ENCODE measurements at regions of chr12 and their contacts with region 1.

Region 1: GRCh38 chr12:10235761-10236631 is 23.3 kb downstream of the GABARAPL1 start:
- DNase-seq: peak in 4 of 5 donors; percentile 30 to 43 (median 38)
- H3K4me3 ChIP-seq: no peak overlapping the region
- H3K4me3 Mint-ChIP-seq: no peak overlapping the region
- H3K27ac ChIP-seq: no peak overlapping the region
- H3K27ac Mint-ChIP-seq: no peak overlapping the region
- H3K4me1 ChIP-seq: no peaks in the 10 kb centered on the region
- H3K4me1 Mint-ChIP-seq: peaks cover 0 to 2% (median 0%) of the 10 kb centered on the region in 4 donors
- H3K27me3 ChIP-seq: no peaks in the 10 kb centered on the region
- H3K27me3 Mint-ChIP-seq: peaks cover 0 to 1% of the 10 kb centered on the region in 2 donors

Region 2: DNA sequence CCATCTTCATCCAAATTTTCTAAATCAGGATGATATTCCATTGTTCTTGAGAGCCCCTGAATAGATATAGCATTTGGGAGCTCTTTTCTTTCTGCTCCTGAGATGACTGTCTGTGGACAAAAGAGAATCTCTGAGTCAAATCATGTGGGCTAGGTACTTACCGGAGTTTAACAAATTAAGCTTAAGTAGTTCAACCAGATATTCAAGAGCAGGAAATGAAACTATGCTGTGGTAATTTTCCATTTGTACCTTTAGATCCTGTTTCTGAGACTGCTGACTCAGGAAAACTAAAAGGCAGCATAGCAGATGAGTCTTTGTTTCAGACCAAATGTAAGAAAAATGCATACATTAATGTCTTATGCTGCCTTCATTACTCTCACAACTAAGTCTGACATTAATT is 106.0 kb before region 1 on chr12 and contains the start of gene CLEC7A:
- CTCF ChIA-PET with region 1: no interaction called
- POLR2A ChIA-PET with region 1: no interaction called
- intact Hi-C with region 1: no loop called
- DNase-seq: peak in 1 of 5 donors; percentile 6
- H3K4me3 ChIP-seq: no peak within 1 kb of the TSS
- H3K4me3 Mint-ChIP-seq: peak within 1 kb of the TSS in 1 of 8 donors; percentile 10
- H3K27ac ChIP-seq: no peak within 1 kb of the TSS
- H3K27ac Mint-ChIP-seq: no peak within 1 kb of the TSS
- H3K4me1 ChIP-seq: peaks cover 10% of the 10 kb centered on the region
- H3K4me1 Mint-ChIP-seq: peaks cover 6 to 10% (median 9%) of the 10 kb centered on the region in 4 donors
- H3K27me3 ChIP-seq: no peaks in the 10 kb centered on the region
- H3K27me3 Mint-ChIP-seq: peaks cover 0 to 1% of the 10 kb centered on the region in 2 donors
- total RNA-seq, gene CLEC7A: 0.89 to 1.3 TPM

Region 3: DNA sequence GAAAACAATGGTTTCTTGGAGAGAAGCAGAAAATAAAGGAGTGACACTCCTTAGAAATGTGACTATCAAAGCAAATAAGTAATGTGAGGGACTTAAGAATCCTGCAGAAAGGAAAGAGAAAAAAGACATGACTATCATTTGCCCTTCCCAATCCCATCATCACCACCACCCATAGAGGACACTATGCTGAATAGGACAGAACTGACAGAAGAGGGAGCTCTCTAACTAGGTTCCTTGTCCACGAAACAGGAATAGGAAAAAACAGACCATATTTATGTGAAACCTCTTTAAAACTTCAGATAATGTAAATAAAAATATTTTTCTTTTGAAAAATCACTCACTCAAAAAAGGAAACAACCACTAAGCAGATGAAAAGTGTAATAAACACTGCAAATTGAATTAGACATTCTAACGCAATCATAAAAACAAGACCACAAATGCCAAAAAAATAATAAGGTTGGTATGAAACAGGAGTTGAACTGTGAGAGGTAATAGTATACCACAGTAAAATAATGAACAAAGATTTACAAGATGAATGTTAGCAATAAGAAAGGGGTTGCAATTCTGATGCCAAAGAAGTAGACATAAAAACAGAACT is 95.7 kb after region 1 on chr12:
- CTCF ChIA-PET with region 1: no interaction called
- POLR2A ChIA-PET with region 1: no interaction called
- intact Hi-C with region 1: loop called (anchors 5 kb)
- DNase-seq: peak in 4 of 5 donors; percentile 14 to 20 (median 18)
- H3K4me3 ChIP-seq: no peak overlapping the region
- H3K4me3 Mint-ChIP-seq: no peak overlapping the region
- H3K27ac ChIP-seq: no peak overlapping the region
- H3K27ac Mint-ChIP-seq: no peak overlapping the region
- H3K4me1 ChIP-seq: no peaks in the 10 kb centered on the region
- H3K4me1 Mint-ChIP-seq: no peaks in the 10 kb centered on the region
- H3K27me3 ChIP-seq: no peaks in the 10 kb centered on the region
- H3K27me3 Mint-ChIP-seq: peaks cover 0 to 4% of the 10 kb centered on the region in 2 donors

Region 4: GRCh38 chr12:10562306-10562933 is 326.4 kb after region 1 on chr12:
- CTCF ChIA-PET with region 1: interaction called, 89 read pairs
- POLR2A ChIA-PET with region 1: interaction called, 3 read pairs
- intact Hi-C with region 1: loop called (anchors 1 kb)
- DNase-seq: peak in 4 of 5 donors; percentile 31 to 45 (median 38)
- H3K4me3 ChIP-seq: no peak overlapping the region
- H3K4me3 Mint-ChIP-seq: no peak overlapping the region
- H3K27ac ChIP-seq: no peak overlapping the region
- H3K27ac Mint-ChIP-seq: no peak overlapping the region
- H3K4me1 ChIP-seq: no peaks in the 10 kb centered on the region
- H3K4me1 Mint-ChIP-seq: no peaks in the 10 kb centered on the region
- H3K27me3 ChIP-seq: no peaks in the 10 kb centered on the region
- H3K27me3 Mint-ChIP-seq: peaks cover 11 to 24% of the 10 kb centered on the region in 2 donors

Region 5: GRCh38 chr12:11202811-11203210 is 966.8 kb after region 1 on chr12:
- CTCF ChIA-PET with region 1: interaction called, 6 read pairs
- POLR2A ChIA-PET with region 1: no interaction called
- intact Hi-C with region 1: loop called (anchors 10 kb)
- DNase-seq: no peak
- H3K4me3 ChIP-seq: no peak overlapping the region
- H3K4me3 Mint-ChIP-seq: no peak overlapping the region
- H3K27ac ChIP-seq: no peak overlapping the region
- H3K27ac Mint-ChIP-seq: no peak overlapping the region
- H3K4me1 ChIP-seq: no peaks in the 10 kb centered on the region
- H3K4me1 Mint-ChIP-seq: no peaks in the 10 kb centered on the region
- H3K27me3 ChIP-seq: no peaks in the 10 kb centered on the region
- H3K27me3 Mint-ChIP-seq: no peaks in the 10 kb centered on the region

Measured in CD4-positive, alpha-beta memory T cell (primary cell).